CD4-positive, alpha-beta memory T cell (primary cell): ENCODE measurements at regions of chr9 and their contacts with region 1.

Region 1: DNA sequence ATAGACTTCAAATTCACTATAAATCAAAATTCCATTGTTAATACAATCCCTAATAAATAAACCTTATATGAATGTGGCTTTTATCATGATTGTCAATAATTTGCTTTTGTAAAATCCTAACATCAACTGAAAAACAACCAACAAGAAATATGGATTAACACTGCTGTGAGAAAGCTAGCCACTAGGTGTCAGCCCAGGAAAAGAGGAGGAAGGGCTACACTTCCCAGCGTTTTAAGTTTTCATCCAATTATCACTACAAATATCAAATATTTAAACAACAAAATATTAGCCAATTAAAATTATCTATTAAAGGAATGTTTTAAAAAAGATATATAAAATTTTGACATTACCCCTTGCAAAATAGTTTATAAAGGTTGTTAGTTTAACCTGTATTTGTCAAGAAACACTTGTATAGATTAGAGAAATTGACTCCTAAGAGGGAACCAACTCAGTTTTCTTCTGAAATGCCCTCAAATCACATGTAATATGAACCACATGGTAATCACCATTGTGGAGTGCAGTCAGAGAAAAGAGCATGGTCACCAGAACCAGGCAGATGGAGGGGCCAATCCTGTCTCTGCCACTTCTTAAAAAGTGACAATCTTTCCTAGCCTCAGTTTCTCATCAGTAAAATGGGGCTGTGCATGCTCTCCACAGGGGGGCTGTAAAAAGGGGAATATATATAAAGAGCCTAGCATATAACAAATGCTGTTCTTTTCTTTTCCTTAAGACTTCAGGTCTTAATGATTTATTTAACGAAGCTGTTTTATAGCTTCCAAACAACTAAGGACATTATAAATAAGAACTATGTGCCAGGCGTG is 188.2 kb downstream of the CRB2 start:
- DNase-seq: peak in 4 of 5 donors; percentile 7 to 23 (median 9)
- H3K4me3 ChIP-seq: no peak overlapping the region
- H3K4me3 Mint-ChIP-seq: no peak overlapping the region
- H3K27ac ChIP-seq: no peak overlapping the region
- H3K27ac Mint-ChIP-seq: no peak overlapping the region
- H3K4me1 ChIP-seq: no peaks in the 10 kb centered on the region
- H3K4me1 Mint-ChIP-seq: no peaks in the 10 kb centered on the region
- H3K27me3 ChIP-seq: no peaks in the 10 kb centered on the region
- H3K27me3 Mint-ChIP-seq: no peaks in the 10 kb centered on the region

Region 2: GRCh38 chr9:123225374-123225813 is 318.8 kb before region 1 on chr9:
- CTCF ChIA-PET with region 1: no interaction called
- POLR2A ChIA-PET with region 1: no interaction called
- intact Hi-C with region 1: no loop called
- DNase-seq: peak; percentile 41 to 78 (median 51)
- H3K4me3 ChIP-seq: no peak overlapping the region
- H3K4me3 Mint-ChIP-seq: peak overlapping the region in 4 of 8 donors; percentile 26 to 42 (median 32)
- H3K27ac ChIP-seq: no peak overlapping the region
- H3K27ac Mint-ChIP-seq: peak overlapping the region in 6 of 7 donors; percentile 24 to 72 (median 52)
- H3K4me1 ChIP-seq: peaks cover 13% of the 10 kb centered on the region
- H3K4me1 Mint-ChIP-seq: peaks cover 14 to 21% (median 15%) of the 10 kb centered on the region in 4 donors
- H3K27me3 ChIP-seq: no peaks in the 10 kb centered on the region
- H3K27me3 Mint-ChIP-seq: no peaks in the 10 kb centered on the region

Region 3: DNA sequence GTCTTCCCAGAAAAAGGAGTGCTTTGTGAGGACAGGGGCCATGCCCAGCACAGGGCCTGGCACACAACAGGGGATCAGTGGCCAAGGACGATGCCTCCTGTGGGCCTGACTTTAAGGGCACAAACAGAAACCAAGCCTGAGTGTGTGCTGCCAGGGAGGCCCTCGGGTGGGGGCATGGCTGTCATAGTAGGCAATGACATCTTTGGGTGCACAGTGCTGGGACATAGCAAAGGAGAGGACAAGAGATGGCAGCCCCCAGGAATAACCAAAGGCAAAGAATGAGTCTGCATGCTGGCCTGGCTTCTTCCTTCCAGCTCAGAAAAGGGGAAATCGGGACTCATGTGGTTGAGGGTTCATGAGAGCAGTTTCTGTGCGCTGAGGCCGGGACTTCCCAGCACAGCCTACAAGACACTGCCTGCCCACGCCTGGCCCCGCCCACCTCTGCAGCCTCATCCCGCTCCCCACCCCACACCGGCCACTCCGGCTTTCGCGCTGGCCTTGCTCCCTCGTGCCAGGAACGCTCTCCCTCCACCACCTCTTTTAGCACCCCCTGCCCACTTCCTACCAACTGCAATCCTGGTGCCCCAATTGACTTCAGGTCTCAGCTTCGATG is 453.6 kb after region 1 on chr9:
- CTCF ChIA-PET with region 1: no interaction called
- POLR2A ChIA-PET with region 1: no interaction called
- intact Hi-C with region 1: no loop called
- DNase-seq: no peak
- H3K4me3 ChIP-seq: no peak overlapping the region
- H3K4me3 Mint-ChIP-seq: peak overlapping the region in 6 of 8 donors; percentile 15 to 65 (median 46)
- H3K27ac ChIP-seq: no peak overlapping the region
- H3K27ac Mint-ChIP-seq: peak overlapping the region in 1 of 7 donors; percentile 74
- H3K4me1 ChIP-seq: peaks cover 32% of the 10 kb centered on the region
- H3K4me1 Mint-ChIP-seq: peaks cover 19 to 35% (median 26%) of the 10 kb centered on the region in 4 donors
- H3K27me3 ChIP-seq: peaks cover 49% of the 10 kb centered on the region
- H3K27me3 Mint-ChIP-seq: peaks cover 67 to 74% of the 10 kb centered on the region in 2 donors

Region 4: DNA sequence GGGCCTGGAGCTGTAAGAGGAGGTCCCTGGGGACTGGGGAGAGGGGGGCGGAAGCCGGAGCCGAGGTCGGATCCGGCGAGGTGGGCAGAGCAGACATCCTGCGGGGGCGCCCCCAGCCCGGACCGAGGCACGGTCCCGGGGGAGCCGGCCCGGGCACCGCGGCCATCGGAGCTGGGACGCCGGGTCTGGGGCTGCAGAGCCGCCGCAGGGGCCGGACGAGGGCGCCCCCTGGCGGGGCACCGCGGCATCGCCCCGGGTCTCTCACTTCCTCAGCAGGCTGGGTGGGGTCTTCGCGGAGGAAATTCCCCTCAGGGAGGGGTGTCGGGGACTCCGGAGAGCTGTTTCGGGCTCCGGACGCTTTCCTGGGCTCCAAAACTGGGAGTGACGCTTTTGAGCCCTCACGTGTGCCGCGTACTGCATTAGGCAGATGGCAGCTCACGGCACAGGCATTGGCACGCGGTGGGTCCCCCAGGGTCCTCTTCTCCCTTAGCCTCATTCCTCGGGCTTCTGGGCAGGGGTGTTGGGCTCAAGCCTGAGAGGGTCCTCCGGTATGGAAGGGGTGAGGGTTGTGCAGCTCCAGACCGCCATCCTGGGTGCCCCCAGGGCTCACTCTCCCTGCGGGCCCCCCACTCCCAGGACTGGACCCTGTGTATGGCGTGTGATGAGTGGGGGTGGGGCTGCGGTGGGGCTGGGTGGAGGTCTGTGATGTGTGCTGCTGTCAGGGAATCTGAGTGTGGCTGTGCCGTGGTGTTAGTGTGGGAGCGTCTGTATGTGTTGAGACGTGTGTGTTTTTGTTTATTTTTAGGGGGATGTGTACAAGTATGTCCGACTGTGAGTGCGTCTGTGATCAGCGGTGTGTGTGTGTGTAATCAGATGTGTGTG is 497.0 kb after region 1 on chr9:
- CTCF ChIA-PET with region 1: interaction called, 18 read pairs
- POLR2A ChIA-PET with region 1: no interaction called
- intact Hi-C with region 1: no loop called
- DNase-seq: peak in 4 of 5 donors; percentile 28 to 41 (median 32)
- H3K4me3 ChIP-seq: no peak overlapping the region
- H3K4me3 Mint-ChIP-seq: peak overlapping the region; percentile 28 to 72 (median 55)
- H3K27ac ChIP-seq: no peak overlapping the region
- H3K27ac Mint-ChIP-seq: no peak overlapping the region
- H3K4me1 ChIP-seq: peaks cover 6% of the 10 kb centered on the region
- H3K4me1 Mint-ChIP-seq: peaks cover 4 to 18% (median 6%) of the 10 kb centered on the region in 4 donors
- H3K27me3 ChIP-seq: peaks cover 16% of the 10 kb centered on the region
- H3K27me3 Mint-ChIP-seq: peaks cover 54 to 64% of the 10 kb centered on the region in 2 donors

Region 5: DNA sequence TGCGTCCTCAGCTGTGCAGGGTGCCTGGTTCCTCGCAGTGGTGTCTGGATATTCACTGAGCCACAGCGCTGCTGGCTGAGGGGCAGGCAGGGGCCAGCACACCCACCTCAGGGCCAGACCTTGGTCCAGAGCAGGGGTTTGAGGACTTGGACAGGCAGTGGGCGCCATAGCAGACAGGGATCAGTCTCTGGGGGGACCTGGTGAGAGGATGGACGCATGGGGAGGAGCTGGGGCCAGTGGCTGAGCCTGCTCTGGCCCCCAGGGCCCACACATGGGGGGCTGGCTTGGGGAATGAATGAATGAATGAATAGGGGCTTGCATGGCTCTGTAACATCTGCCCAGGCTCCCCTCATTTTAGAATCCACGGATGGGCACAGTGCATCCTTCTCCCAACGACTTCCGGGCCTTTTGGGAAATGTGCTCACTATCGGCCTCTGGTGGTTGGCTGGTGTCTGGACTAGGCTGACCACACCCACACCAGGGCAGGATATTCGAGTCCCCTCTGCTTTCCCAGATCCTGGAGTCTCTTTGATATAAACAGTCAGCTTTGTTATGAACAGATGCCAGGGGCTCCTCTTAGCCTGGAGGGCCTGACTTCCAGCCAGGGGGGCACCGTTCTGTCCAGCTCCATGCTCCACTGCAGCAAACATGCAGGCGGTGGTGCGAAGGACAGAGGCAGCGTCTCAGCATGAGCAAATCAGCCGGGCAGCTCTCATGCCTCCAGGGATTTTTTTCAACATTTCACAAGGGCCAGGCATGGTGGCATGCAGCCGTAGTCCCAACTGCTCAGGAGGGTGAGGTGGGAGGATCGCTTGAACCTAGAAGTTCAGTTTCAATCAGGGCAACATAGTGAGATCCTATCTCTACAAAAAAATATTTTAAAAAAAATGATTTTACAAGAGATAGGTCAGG is 776.1 kb after region 1 on chr9:
- CTCF ChIA-PET with region 1: no interaction called
- POLR2A ChIA-PET with region 1: no interaction called
- intact Hi-C with region 1: loop called (anchors 10 kb)
- DNase-seq: peak in 4 of 5 donors; percentile 19 to 31 (median 22)
- H3K4me3 ChIP-seq: no peak overlapping the region
- H3K4me3 Mint-ChIP-seq: no peak overlapping the region
- H3K27ac ChIP-seq: no peak overlapping the region
- H3K27ac Mint-ChIP-seq: peak overlapping the region in 3 of 7 donors; percentile 29 to 47 (median 37)
- H3K4me1 ChIP-seq: peaks cover 6% of the 10 kb centered on the region
- H3K4me1 Mint-ChIP-seq: peaks cover 3 to 12% (median 6%) of the 10 kb centered on the region in 4 donors
- H3K27me3 ChIP-seq: no peaks in the 10 kb centered on the region
- H3K27me3 Mint-ChIP-seq: no peaks in the 10 kb centered on the region

Region 6: GRCh38 chr9:124537926-124538325 is 993.7 kb after region 1 on chr9:
- CTCF ChIA-PET with region 1: interaction called, 4 read pairs
- POLR2A ChIA-PET with region 1: no interaction called
- intact Hi-C with region 1: loop called (anchors 5 kb)
- DNase-seq: no peak
- H3K4me3 ChIP-seq: no peak overlapping the region
- H3K4me3 Mint-ChIP-seq: no peak overlapping the region
- H3K27ac ChIP-seq: no peak overlapping the region
- H3K27ac Mint-ChIP-seq: peak overlapping the region in 1 of 7 donors; percentile 40
- H3K4me1 ChIP-seq: no peaks in the 10 kb centered on the region
- H3K4me1 Mint-ChIP-seq: peaks cover 0 to 2% (median 0%) of the 10 kb centered on the region in 4 donors
- H3K27me3 ChIP-seq: no peaks in the 10 kb centered on the region
- H3K27me3 Mint-ChIP-seq: peaks cover 9 to 10% of the 10 kb centered on the region in 2 donors